Mammary epithelial cell (primary cell): ENCODE measurements at regions of chr3 and their contacts with region 1.

Region 1: DNA sequence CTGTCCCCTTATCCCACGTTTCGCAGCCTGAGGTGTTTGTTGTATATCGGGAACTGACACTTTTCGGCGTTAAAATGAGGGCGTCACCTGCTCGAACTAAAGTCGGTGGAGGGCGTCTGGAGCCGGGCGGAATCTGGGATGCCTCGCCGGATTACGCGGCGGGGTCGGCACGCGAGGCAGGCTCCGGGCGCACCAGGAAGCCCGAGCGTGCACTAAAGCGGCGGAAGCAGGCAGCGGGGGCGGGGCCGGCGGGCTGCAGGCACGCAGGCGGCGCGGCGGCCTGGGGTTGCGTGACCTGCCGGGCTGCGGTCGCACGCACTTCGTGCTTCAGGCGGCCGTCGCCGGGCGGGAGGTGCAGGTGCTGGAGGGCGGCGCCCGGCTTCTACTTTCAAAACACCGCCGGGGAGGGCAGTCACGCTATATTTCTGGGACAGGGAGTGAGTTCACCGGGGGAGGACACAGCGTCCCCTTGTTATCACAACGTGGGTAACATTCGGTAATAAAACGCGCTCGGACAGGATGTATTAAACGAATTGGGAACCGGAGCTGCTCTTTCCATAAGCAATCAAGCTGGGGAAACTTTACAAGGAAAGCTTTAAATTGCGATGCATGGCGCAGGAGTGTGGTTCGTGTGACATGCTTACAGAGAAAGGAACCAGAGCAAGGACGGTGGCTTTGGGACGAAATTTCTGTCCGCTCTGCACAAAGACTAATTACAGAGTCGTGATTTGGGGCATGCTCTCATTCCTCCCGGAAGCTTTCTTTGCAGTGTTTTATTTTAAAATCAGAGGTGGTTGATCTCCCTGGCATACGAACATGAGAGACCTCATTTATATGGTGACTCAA is 9.1 kb upstream of the LEKR1 start:
- DNase-seq: peak; percentile 87
- H3K4me3 ChIP-seq: peak overlapping the region in 2 of 3 experiments; percentile 20 to 28
- H3K27ac ChIP-seq: peak overlapping the region; percentile 97
- H3K4me1 ChIP-seq: peaks cover 57% of the 10 kb centered on the region
- H3K27me3 ChIP-seq: no peaks in the 10 kb centered on the region
- CTCF ChIP-seq: peak in 1 of 2 donors; percentile 28

Region 2: GRCh38 chr3:156681002-156681401 is 136.0 kb before region 1 on chr3:
- CTCF ChIA-PET with region 1: no interaction called
- dilution Hi-C with region 1: no loop called
- in situ Hi-C with region 1: loop called in 1 of 2 experiments (anchors 10 kb)
- intact Hi-C with region 1: loop called (anchors 2 kb)
- DNase-seq: peak; percentile 97
- H3K4me3 ChIP-seq: peak overlapping the region in 1 of 3 experiments; percentile 94
- H3K27ac ChIP-seq: peak overlapping the region; percentile 99
- H3K4me1 ChIP-seq: peaks cover 84% of the 10 kb centered on the region
- H3K27me3 ChIP-seq: no peaks in the 10 kb centered on the region
- CTCF ChIP-seq: no peak

Region 3: DNA sequence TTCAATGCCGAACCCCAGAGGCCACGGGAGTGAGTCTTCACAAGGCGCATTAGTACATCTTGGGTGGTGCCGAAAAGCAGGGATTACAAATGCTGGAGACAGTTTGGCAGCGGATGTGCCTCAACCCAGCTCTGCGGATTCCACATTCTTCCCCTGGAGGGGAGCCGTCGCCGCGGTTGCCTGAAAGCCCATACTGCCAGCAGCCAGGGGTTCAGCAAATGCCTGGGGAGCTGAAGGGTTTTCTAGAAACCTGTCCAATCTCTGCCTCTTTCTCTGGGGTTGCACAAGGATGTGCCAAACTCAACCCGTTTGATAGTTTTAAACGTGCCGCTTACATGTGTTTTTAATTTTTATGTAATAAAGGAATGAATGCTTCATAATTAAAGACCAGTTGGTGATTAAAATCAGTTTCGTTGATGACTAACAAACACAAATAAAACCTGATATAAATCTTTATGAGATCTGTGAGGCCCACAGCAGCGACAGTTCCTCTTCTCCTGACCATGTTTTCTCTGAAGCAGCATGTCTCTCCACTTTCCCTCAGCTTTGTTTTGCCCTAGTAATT is 65.5 kb before region 1 on chr3:
- CTCF ChIA-PET with region 1: no interaction called
- dilution Hi-C with region 1: loop called (anchors 5 kb)
- in situ Hi-C with region 1: no loop called
- intact Hi-C with region 1: loop called (anchors 1 kb)
- DNase-seq: peak; percentile 87
- H3K4me3 ChIP-seq: peak overlapping the region in 1 of 3 experiments; percentile 2
- H3K27ac ChIP-seq: peak overlapping the region; percentile 94
- H3K4me1 ChIP-seq: peaks cover 27% of the 10 kb centered on the region
- H3K27me3 ChIP-seq: no peaks in the 10 kb centered on the region
- CTCF ChIP-seq: peak in 1 of 2 donors; percentile 29

Region 4: DNA sequence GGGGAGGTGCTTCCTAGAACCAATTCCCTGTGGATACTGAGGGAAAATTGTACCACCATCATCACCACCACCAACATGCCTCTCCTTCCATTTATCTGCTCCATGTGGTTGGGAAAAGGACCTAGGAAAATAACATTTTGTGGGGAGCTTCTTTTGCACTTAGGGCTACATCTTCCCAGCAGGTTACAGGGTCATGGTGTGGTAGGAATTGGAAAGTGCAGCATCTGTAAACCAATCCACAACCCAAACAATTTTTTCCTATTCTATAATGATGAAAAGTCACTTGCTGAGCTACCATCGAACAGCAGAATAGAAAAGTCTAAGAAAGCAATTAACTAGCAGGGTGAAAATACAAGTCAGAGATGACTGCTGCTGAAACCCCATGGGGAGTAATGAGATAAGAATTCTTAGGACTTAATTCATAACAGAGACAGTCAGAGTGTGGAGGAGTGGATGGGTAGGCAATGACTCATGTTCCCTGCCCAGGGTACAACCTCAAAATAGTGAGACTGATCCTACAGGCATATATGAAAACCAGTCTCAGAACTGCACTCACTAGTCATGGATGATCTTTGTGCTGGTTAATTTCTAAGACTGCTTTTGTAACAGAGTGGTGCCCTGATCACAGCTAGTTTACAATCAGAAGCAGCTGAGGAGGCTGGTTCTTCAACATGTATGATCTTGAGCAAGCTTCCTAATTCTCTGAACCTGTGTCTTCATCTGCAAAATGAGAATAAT is 28.9 kb before region 1 on chr3:
- CTCF ChIA-PET with region 1: no interaction called
- dilution Hi-C with region 1: loop called (anchors 5 kb)
- in situ Hi-C with region 1: no loop called
- intact Hi-C with region 1: loop called (anchors 1 kb)
- DNase-seq: peak; percentile 97
- H3K4me3 ChIP-seq: no peak overlapping the region
- H3K27ac ChIP-seq: peak overlapping the region; percentile 99
- H3K4me1 ChIP-seq: peaks cover 60% of the 10 kb centered on the region
- H3K27me3 ChIP-seq: no peaks in the 10 kb centered on the region
- CTCF ChIP-seq: peak in 1 of 2 donors; percentile 6

Region 5: GRCh38 chr3:157136647-157137387 is 319.8 kb after region 1 on chr3:
- CTCF ChIA-PET with region 1: no interaction called
- dilution Hi-C with region 1: no loop called
- in situ Hi-C with region 1: loop called in 1 of 2 experiments (anchors 5 kb)
- intact Hi-C with region 1: no loop called
- DNase-seq: peak; percentile 81
- H3K4me3 ChIP-seq: no peak overlapping the region
- H3K27ac ChIP-seq: peak overlapping the region; percentile 56
- H3K4me1 ChIP-seq: peaks cover 52% of the 10 kb centered on the region
- H3K27me3 ChIP-seq: no peaks in the 10 kb centered on the region
- CTCF ChIP-seq: no peak

Region 6: DNA sequence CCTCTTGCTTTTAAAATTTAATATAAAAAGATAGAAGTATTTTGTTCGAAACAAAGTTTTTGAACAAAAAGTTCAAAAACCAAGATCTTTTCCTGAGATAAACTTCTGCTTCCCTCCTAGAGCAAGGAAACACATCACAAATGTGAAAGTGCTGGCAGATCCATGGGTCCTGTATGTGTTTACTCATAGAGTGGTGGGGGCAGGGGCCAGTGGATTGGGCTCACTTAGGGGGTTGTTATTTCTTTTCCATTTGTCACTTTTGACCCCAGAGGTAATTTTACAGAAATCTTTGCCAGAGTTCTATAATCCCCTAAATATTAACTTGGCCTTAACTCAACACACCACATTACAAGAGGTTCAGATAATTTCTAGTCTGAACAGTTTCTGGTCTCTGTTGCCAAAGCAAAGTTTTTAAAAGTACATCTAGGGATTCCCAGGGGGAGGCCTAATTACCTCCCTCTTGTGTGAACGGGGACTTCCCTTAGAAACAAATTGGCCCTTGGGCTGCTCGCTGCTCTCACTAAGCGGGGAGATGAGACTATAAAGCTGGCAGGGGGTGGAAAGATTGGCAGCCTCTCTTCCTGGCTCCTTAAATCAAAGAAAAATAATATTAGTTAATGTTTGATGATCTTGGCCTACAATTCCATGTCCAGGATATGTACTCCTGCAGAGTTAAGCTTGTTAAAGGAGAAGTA is 552.9 kb after region 1 on chr3:
- CTCF ChIA-PET with region 1: no interaction called
- dilution Hi-C with region 1: no loop called
- in situ Hi-C with region 1: no loop called
- intact Hi-C with region 1: no loop called
- DNase-seq: no peak
- H3K4me3 ChIP-seq: no peak overlapping the region
- H3K27ac ChIP-seq: no peak overlapping the region
- H3K4me1 ChIP-seq: no peaks in the 10 kb centered on the region
- H3K27me3 ChIP-seq: peaks cover 8% of the 10 kb centered on the region
- CTCF ChIP-seq: no peak